Calu3 (cell line): ENCODE measurements at regions of chr12 and their contacts with region 1.

Region 1: GRCh38 chr12:685388-685787 is 22.1 kb upstream of the NINJ2 start:
- DNase-seq: no peak
- H3K4me3 Mint-ChIP-seq: no peak overlapping the region
- H3K27ac Mint-ChIP-seq: no peak overlapping the region
- H3K4me1 Mint-ChIP-seq: no peaks in the 10 kb centered on the region
- H3K27me3 Mint-ChIP-seq: no peaks in the 10 kb centered on the region
- CTCF ChIP-seq: no peak

Region 2: GRCh38 chr12:989751-990660 is 304.6 kb after region 1 on chr12:
- CTCF ChIA-PET with region 1: interaction called, 14 read pairs
- intact Hi-C with region 1: no loop called
- DNase-seq: peak; percentile 37
- H3K4me3 Mint-ChIP-seq: peak overlapping the region; percentile 71
- H3K27ac Mint-ChIP-seq: peak overlapping the region; percentile 62
- H3K4me1 Mint-ChIP-seq: peaks cover 23% of the 10 kb centered on the region
- H3K27me3 Mint-ChIP-seq: no peaks in the 10 kb centered on the region
- CTCF ChIP-seq: no peak

Region 3: GRCh38 chr12:1162081-1162760 is 476.8 kb after region 1 on chr12:
- CTCF ChIA-PET with region 1: no interaction called
- intact Hi-C with region 1: no loop called
- DNase-seq: no peak
- H3K4me3 Mint-ChIP-seq: no peak overlapping the region
- H3K27ac Mint-ChIP-seq: no peak overlapping the region
- H3K4me1 Mint-ChIP-seq: no peaks in the 10 kb centered on the region
- H3K27me3 Mint-ChIP-seq: no peaks in the 10 kb centered on the region
- CTCF ChIP-seq: no peak